Body of pancreas (tissue), 4 donors: ENCODE measurements at regions of chr17 and their contacts with region 1.

Region 1: GRCh38 chr17:2244545-2245525 is 58.8 kb downstream of the SMG6 start:
- DNase-seq: peak; percentile 84 to 88 (median 86)
- ATAC-seq: peak; percentile 89
- H3K4me3 ChIP-seq: no peak overlapping the region
- H3K27ac ChIP-seq: peak overlapping the region in 1 of 4 donors; percentile 0
- H3K4me1 ChIP-seq: peaks cover 3% of the 10 kb centered on the region
- H3K27me3 ChIP-seq: no peaks in the 10 kb centered on the region
- CTCF ChIP-seq: peak; percentile 93 to 98 (median 96)
- POLR2A ChIP-seq: no peak

Region 2: GRCh38 chr17:2056206-2057174 is 188.3 kb before region 1 on chr17:
- intact Hi-C with region 1: loop called (anchors 2 kb)
- DNase-seq: peak in 2 of 4 donors; percentile 35 to 47
- ATAC-seq: no peak
- H3K4me3 ChIP-seq: no peak overlapping the region
- H3K27ac ChIP-seq: peak overlapping the region in 2 of 4 donors; percentile 26 to 62
- H3K4me1 ChIP-seq: peaks cover 56% of the 10 kb centered on the region
- H3K27me3 ChIP-seq: peaks cover 0 to 27% of the 10 kb centered on the region in 2 donors
- CTCF ChIP-seq: peak in 3 of 7 experiments; percentile 7 to 43 (median 10)
- POLR2A ChIP-seq: no peak

Region 3: DNA sequence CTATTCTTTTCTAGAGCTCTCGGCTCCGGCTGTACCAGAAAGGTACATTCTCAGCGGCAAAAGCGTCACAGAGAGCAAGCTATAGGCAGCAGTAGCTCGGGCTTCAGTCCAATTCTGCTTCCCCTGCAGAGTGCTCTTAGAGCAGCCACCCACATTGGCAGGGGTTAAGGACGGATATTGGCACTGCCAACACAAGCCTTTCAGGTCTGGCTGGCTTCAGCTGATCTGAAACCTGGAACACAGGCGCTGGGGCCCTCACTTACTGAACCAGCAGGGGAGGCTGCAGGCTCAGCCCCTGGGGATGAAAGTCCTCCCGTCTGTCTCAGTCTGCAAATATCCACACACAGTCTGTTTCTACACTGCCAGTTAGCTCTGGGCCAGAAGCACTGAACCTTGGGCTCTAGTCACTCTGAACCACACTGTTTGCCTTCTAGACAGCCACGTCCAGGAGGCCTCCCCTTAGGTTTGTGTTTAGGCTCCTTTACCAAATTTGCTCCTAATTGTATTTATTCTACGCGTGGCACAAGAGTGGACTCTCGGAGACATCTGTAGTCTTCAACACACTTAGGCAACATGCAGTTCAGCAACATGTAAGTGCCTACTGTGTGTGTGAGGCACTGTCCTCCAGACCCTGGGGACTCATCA is 149.8 kb before region 1 on chr17:
- intact Hi-C with region 1: loop called (anchors 10 kb)
- DNase-seq: peak; percentile 45 to 89 (median 71)
- ATAC-seq: peak; percentile 34
- H3K4me3 ChIP-seq: no peak overlapping the region
- H3K27ac ChIP-seq: peak overlapping the region in 1 of 4 donors; percentile 29
- H3K4me1 ChIP-seq: peaks cover 18% of the 10 kb centered on the region
- H3K27me3 ChIP-seq: no peaks in the 10 kb centered on the region
- CTCF ChIP-seq: peak; percentile 17 to 94 (median 53)
- POLR2A ChIP-seq: no peak

Region 4: DNA sequence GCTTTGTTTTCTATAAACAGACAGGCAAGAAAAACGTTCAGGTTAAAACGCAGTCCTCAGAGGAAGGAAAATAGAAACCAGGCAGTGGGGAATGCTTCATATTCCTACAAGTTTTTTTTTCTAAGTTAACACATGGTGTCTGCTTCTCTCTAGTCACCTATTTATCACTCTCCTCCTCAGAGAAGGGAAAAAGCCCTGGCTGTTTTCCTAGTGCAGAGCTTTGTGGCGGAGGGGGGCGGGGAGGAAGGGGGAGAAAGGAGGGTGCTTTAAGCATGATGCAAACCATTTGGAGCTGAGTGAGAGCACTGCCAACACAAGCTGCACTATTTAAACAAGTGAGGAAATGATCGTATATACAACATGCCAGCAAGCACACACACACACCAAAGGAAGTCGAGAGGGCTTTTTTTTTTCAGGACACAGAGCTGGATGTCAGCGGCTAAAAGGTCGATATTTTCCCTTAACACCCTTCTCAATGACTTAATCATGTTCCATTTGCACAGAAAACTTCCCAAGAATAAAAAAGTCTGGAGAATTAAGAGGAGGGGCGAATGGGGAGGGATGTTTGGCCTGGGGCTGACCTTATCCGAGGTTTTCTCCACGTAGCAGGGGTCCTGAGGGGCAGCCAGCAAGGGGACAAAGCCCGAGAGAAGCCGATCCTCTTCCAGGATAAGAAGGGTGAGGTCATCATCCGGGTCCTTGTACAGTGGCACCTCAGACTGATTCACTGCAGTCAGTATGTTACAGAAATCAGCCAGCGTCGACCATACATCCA is 72.6 kb before region 1 on chr17:
- intact Hi-C with region 1: no loop called
- DNase-seq: peak; percentile 79 to 90 (median 86)
- ATAC-seq: peak; percentile 89
- H3K4me3 ChIP-seq: no peak overlapping the region
- H3K27ac ChIP-seq: peak overlapping the region; percentile 63 to 90 (median 84)
- H3K4me1 ChIP-seq: peaks cover 43% of the 10 kb centered on the region
- H3K27me3 ChIP-seq: no peaks in the 10 kb centered on the region
- CTCF ChIP-seq: no peak
- POLR2A ChIP-seq: peak in 1 of 3 donors; percentile 37